ENCODE measurements at regions of chr16 and their contacts with region 1.

Region 1: GRCh38 chr16:67109407-67110135 is at the start of gene PHAF1:
- DNase-seq: peak; percentile 93 to 98 (median 94)
- ATAC-seq: peak; percentile 97 to 98 (median 98)
- H3K4me3 ChIP-seq: peak within 1 kb of the TSS; percentile 70 to 100 (median 94)
- H3K27ac ChIP-seq: peak within 1 kb of the TSS; percentile 33 to 91 (median 85)
- H3K4me1 ChIP-seq: peaks cover 0 to 60% (median 30%) of the 10 kb centered on the region in 12 donors
- H3K27me3 ChIP-seq: no peaks in the 10 kb centered on the region
- CTCF ChIP-seq: no peak
- POLR2A ChIP-seq: peak; percentile 5 to 94
- total RNA-seq, gene PHAF1: 8.4 to 17.8 (median 11.6) TPM

Region 2: GRCh38 chr16:67017810-67018488 is 91.6 kb before region 1 on chr16:
- intact Hi-C with region 1: loop called in 1 of 10 experiments (anchors 10 kb)
- DNase-seq: peak in 2 of 5 donors; percentile 45 to 47
- ATAC-seq: peak; percentile 14 to 41 (median 35)
- H3K4me3 ChIP-seq: no peak overlapping the region
- H3K27ac ChIP-seq: no peak overlapping the region
- H3K4me1 ChIP-seq: peaks cover 0 to 22% (median 18%) of the 10 kb centered on the region in 12 donors
- H3K27me3 ChIP-seq: peaks cover 0 to 20% (median 0%) of the 10 kb centered on the region in 9 donors
- CTCF ChIP-seq: peak in 11 of 12 donors; percentile 27 to 59 (median 50)
- POLR2A ChIP-seq: no peak

Region 3: GRCh38 chr16:67028555-67029248 is 80.9 kb before region 1 on chr16 and contains the start of gene CBFB:
- intact Hi-C with region 1: loop called in 5 of 10 experiments (anchors 2 to 10 kb)
- DNase-seq: peak; percentile 94 to 97 (median 94)
- ATAC-seq: peak; percentile 87 to 96 (median 94)
- H3K4me3 ChIP-seq: peak within 1 kb of the TSS; percentile 58 to 99 (median 94)
- H3K27ac ChIP-seq: peak within 1 kb of the TSS; percentile 90 to 100 (median 99)
- H3K4me1 ChIP-seq: peaks cover 0 to 36% (median 28%) of the 10 kb centered on the region in 12 donors
- H3K27me3 ChIP-seq: no peaks in the 10 kb centered on the region
- CTCF ChIP-seq: peak in 2 of 12 donors; percentile 7 to 23
- POLR2A ChIP-seq: peak; percentile 18 to 77
- total RNA-seq, gene CBFB: 16.4 to 53.6 (median 28.1) TPM

Region 4: GRCh38 chr16:67159593-67160406 is 50.2 kb after region 1 on chr16 and contains the starts of genes FBXL8 and TRADD:
- intact Hi-C with region 1: loop called in 1 of 10 experiments (anchors 5 kb)
- DNase-seq: peak; percentile 75 to 88 (median 82)
- ATAC-seq: peak; percentile 23 to 75 (median 71)
- H3K4me3 ChIP-seq: peak within 1 kb of the TSS; percentile 75 to 98 (median 97)
- H3K27ac ChIP-seq: peak within 1 kb of the TSS; percentile 36 to 94 (median 83)
- H3K4me1 ChIP-seq: peaks cover 0 to 68% (median 58%) of the 10 kb centered on the region in 12 donors
- H3K27me3 ChIP-seq: peaks cover 0 to 32% (median 2%) of the 10 kb centered on the region in 9 donors
- CTCF ChIP-seq: peak in 11 of 12 donors; percentile 7 to 59 (median 38)
- POLR2A ChIP-seq: peak in 1 of 2 donors; percentile 76
- total RNA-seq, gene FBXL8: 5.0 to 13.4 (median 7.2) TPM
- total RNA-seq, gene TRADD: 4.7 to 14.3 (median 8.4) TPM

Region 5: DNA sequence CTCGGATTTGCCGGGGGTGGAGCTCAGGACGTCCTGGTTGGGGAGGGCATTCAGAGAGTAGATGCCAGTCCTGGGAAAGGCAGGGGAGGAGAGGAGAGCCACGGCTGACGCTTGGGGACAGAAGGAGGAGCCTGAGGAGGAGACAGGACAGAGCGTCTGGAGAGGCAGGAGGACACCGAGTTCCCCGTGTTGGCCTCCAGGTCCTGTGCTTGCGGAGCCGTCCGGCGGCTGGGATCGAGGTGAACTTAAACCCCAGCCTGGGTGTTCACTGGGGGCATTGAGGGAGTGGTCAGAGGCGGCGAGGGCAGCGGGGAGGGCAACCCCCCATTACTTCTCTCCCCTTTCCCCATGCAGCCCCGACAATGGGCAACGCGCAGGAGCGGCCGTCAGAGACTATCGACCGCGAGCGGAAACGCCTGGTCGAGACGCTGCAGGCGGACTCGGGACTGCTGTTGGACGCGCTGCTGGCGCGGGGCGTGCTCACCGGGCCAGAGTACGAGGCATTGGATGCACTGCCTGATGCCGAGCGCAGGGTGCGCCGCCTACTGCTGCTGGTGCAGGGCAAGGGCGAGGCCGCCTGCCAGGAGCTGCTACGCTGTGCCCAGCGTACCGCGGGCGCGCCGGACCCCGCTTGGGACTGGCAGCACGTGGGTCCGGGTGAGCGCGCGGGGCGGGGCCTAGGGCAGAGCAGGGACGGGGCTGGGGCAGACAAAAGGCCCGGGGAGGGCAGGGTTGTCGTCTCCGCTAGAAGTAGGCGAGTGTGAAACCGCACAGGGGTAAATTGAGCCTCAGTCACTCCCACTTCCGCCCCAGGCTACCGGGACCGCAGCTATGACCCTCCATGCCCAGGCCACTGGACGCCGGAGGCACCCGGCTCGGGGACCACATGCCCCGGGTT is 64.5 kb after region 1 on chr16:
- intact Hi-C with region 1: loop called in 1 of 10 experiments (anchors 10 kb)
- DNase-seq: peak; percentile 85 to 95 (median 93)
- ATAC-seq: peak; percentile 73 to 78 (median 77)
- H3K4me3 ChIP-seq: peak overlapping the region; percentile 4 to 65 (median 53)
- H3K27ac ChIP-seq: peak overlapping the region; percentile 80 to 97 (median 92)
- H3K4me1 ChIP-seq: peaks cover 5 to 70% (median 58%) of the 10 kb centered on the region in 12 donors
- H3K27me3 ChIP-seq: peaks cover 0 to 4% (median 0%) of the 10 kb centered on the region in 9 donors
- CTCF ChIP-seq: peak in 9 of 12 donors; percentile 11 to 50 (median 35)
- POLR2A ChIP-seq: peak; percentile 22 to 75